Psoas muscle (tissue), 8 donors: ENCODE measurements at regions of chrX and their contacts with region 1.

Region 1: GRCh38 chrX:109475174-109475891 is 6.6 kb downstream of the GUCY2F start:
- DNase-seq: no peak
- ATAC-seq: peak in 3 of 4 donors; percentile 54 to 69 (median 65)
- H3K4me3 ChIP-seq: no peak overlapping the region
- H3K27ac ChIP-seq: no peak overlapping the region
- H3K4me1 ChIP-seq: no peaks in the 10 kb centered on the region
- H3K27me3 ChIP-seq: peaks cover 0 to 78% (median 0%) of the 10 kb centered on the region in 3 donors
- CTCF ChIP-seq: peak; percentile 50

Region 2: DNA sequence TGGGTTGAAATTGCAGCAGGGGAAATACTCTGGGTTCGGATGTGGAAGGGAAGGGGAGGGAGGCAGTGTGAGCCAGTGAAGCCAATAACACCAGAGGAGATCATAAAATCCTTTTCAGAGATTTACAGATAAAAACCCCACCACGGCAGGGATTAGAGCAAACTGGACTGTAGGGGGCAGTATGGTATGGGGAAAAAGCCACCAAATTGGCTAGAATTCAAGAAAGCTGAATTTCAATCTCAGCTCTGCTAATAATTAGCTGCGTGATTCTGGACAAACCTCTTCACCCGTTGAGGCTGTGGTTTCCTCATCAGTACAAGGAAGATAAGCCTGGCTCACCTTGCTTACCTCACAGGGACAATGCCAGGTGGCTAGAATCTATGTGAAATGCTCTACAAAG is 1275.6 kb before region 1 on chrX:
- intact Hi-C with region 1: loop called in 1 of 2 experiments (anchors 10 kb)
- DNase-seq: no peak
- ATAC-seq: peak in 2 of 4 donors; percentile 53 to 71
- H3K4me3 ChIP-seq: no peak overlapping the region
- H3K27ac ChIP-seq: no peak overlapping the region
- H3K4me1 ChIP-seq: no peaks in the 10 kb centered on the region
- H3K27me3 ChIP-seq: peaks cover 0 to 18% (median 0%) of the 10 kb centered on the region in 3 donors
- CTCF ChIP-seq: peak; percentile 54

Region 3: DNA sequence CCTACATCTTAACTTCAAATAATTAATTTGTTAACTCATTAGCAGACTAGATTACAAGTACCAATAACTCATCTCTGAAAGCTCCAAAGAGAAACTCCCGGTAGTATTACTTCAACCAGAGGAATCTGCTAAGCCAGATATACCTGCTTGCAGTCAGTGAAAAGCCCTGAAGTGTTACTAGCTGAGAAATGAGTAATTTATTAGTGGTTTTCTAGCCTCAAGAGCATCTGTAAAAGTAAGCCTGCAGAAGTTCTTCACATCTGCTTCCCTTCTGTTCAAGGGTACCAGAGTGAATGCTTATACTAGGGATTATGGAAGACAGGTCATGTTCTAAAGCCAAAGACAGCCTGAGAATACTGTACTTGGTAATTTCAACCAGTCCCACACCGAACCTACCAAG is 773.7 kb before region 1 on chrX:
- intact Hi-C with region 1: loop called in 1 of 2 experiments (anchors 2 kb)
- DNase-seq: no peak
- ATAC-seq: no peak
- H3K4me3 ChIP-seq: no peak overlapping the region
- H3K27ac ChIP-seq: no peak overlapping the region
- H3K4me1 ChIP-seq: no peaks in the 10 kb centered on the region
- H3K27me3 ChIP-seq: peaks cover 0 to 6% (median 0%) of the 10 kb centered on the region in 3 donors
- CTCF ChIP-seq: no peak

Region 4: GRCh38 chrX:109856974-109857373 is 381.6 kb after region 1 on chrX:
- intact Hi-C with region 1: no loop called
- DNase-seq: no peak
- ATAC-seq: no peak
- H3K4me3 ChIP-seq: no peak overlapping the region
- H3K27ac ChIP-seq: no peak overlapping the region
- H3K4me1 ChIP-seq: no peaks in the 10 kb centered on the region
- H3K27me3 ChIP-seq: peaks cover 0 to 2% (median 0%) of the 10 kb centered on the region in 3 donors
- CTCF ChIP-seq: peak; percentile 80